ENCODE measurements at regions of chr2 and their contacts with region 1.

Region 1: DNA sequence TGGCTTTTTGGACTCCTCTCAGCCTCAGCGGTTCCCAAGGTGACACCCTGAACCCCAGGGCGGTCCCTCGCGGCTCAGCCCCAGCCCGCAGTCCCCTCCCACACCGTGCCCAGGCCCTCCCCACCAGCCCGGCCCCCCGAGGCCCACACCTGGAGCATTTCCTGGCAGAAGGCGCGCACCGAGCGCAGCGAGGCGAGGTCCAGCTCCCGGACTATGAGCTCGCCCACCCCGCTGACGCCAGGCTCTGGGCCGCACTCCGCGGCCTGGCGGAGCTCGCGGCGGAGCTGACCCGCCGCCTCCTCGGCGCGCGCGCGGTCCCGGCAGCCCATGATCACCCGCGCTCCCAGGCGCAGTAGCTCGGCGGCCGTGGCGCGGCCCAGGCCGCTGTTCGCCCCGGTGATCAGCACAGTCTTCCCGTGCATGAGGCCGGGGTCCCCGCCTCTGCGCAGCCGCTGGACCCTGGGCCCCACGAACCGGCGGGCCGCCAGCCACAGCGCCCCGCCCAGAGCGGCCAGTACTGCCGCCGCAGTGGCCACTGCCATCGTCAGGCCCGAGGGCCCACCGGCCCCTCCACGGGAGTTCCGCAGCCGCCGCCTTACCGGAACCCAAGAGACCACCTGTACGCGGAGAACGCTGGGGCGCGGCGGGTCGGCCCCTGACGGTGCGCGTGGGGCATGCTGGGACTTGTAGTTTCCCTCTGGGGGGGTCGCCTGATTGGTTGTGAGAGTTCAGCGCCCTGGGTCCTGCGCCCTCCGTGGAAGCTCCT is at the start of gene RDH14:
- DNase-seq: peak; percentile 94
- ATAC-seq: peak; percentile 94
- H3K4me3 Mint-ChIP-seq: peak within 1 kb of the TSS; percentile 84
- H3K27ac Mint-ChIP-seq: peak within 1 kb of the TSS; percentile 90
- H3K4me1 Mint-ChIP-seq: peaks cover 32% of the 10 kb centered on the region
- H3K27me3 Mint-ChIP-seq: no peaks in the 10 kb centered on the region
- total RNA-seq, gene RDH14: 16.1 to 18.3 TPM

Region 2: DNA sequence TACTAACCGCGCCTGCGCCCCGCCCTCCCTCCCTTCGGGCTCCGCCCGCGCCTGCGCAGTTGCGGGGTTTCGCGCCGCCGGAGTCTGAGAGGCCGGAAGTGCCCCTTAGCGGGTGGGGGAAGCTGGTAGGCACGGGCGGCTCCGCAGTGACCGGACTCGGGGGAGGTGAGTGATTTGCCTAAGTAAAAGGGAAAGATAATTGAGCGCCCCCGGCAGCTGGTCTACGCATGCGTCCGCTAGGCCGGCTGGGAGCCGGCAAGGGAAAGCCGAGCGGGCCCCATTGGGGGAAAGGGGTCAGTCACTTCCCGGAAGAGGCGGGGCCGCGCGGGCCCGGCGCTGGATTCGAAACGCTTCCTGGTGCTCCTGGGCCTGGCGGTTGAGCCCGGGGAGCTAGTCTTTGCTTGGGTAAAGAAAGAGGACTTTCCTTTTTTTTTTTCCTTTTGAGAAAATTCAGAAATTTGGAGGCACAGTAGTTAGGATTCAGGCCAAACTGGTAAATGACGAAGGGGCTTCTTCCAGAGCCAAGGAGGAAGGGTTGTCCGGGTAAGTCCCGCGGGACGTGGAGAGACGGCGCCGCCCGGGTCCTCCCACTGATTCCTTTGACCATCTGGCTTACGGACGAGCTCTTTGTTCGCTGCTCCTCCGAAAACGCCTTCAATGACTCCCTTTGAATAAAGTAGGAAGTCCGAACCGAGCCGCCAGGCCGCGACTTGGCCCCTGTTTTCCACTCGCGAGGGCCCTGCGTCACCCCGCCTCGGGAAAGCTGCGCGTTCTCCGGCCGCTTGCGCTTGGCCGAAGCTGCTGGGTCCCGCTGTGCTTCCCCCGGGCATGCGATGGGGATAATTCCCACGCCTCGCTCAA is 806.2 kb before region 1 on chr2 and contains the starts of genes GEN1 and SMC6:
- CTCF ChIA-PET with region 1: no interaction called
- POLR2A ChIA-PET with region 1: no interaction called
- intact Hi-C with region 1: loop called in 1 of 2 experiments (anchors 5 kb)
- DNase-seq: peak; percentile 95
- ATAC-seq: peak; percentile 90
- H3K4me3 Mint-ChIP-seq: peak within 1 kb of the TSS; percentile 91
- H3K27ac Mint-ChIP-seq: peak within 1 kb of the TSS; percentile 93
- H3K4me1 Mint-ChIP-seq: peaks cover 20% of the 10 kb centered on the region
- H3K27me3 Mint-ChIP-seq: no peaks in the 10 kb centered on the region
- total RNA-seq, gene GEN1: 21.9 to 25.4 TPM
- total RNA-seq, gene SMC6: 25.4 to 26.3 TPM

Region 3: DNA sequence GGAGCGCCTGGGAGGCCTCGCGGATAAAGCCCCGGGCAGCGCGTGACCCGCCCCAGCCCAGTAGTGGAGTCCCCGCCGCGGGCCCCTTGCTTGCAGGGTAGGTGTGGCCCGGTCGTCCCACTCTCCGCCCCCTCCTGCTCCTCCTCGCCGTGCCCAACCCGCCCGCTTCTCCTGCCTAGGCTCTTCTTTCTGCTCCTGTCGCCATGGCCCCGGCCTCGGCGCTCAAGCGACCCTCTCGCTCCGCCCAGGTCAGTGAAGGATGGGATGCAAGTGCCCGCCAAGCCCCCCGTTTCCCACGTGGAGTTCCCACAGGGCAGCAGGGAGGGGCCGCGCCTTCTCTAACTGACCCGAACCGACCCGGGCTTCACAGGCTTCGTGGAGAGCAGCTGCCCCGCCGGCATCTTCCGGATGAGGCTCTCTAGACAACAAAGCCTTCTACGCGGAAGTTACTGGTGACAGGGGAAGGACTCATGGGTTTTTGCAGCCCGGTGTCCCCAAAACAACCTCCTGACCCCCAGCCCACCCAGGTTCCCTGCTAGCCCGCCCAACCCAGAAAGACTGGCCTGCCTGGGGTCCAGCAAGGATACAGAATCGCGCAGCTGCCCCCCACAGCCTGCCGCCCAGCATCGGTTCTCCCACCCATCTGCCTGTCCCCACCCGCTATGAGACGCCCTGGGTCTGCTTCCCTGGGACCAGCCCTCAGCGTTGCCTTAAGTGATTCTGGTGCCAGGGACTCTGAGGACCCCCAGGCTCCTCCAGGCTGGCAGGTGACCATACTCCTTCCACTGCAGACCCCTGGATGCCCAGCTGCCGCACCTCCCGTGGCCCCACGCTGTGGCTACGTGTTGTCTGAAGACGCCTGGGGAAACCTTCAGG is 1308.7 kb after region 1 on chr2:
- CTCF ChIA-PET with region 1: no interaction called
- POLR2A ChIA-PET with region 1: no interaction called
- intact Hi-C with region 1: loop called in 1 of 2 experiments (anchors 5 kb)
- DNase-seq: peak; percentile 73
- ATAC-seq: peak; percentile 88
- H3K4me3 Mint-ChIP-seq: peak overlapping the region; percentile 76
- H3K27ac Mint-ChIP-seq: peak overlapping the region; percentile 87
- H3K4me1 Mint-ChIP-seq: peaks cover 20% of the 10 kb centered on the region
- H3K27me3 Mint-ChIP-seq: no peaks in the 10 kb centered on the region

Region 4: DNA sequence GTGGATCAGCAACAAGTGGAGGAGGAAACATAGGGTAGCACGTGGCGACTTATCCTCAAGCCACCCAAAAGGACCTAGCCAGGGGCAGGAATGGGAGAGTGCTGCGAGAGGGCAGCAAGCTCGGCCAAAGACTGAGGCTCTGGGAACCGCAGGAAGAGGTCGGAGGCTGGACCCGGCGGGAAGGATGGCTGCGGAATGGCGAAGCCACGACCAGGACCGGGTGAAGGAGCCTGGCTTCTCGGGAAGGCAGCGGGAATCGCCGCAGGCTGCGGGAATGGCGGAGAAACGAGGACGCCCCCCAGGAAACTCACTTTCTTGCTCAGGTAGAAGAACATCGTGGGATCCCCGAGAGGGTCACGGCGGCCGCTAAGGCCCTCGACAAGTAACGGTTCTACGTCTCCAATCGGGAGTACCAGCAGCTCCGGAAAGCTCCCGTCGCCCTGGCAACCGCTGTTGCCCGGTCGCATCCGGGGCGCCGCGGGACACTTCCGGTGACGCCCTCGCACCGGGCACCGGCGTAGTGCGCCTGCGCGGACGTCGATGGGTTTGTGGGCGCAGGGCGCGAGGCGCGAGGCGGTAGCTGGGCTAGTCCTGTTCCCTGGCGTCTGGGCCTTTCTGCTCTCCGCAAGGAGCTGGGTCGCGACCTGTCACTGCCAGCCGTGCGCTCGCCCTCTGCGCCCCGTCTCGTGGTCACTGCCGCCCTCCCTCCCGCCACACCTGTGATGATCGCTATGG is 1429.6 kb after region 1 on chr2 and contains the start of gene WDR35:
- CTCF ChIA-PET with region 1: no interaction called
- POLR2A ChIA-PET with region 1: no interaction called
- intact Hi-C with region 1: loop called in 1 of 2 experiments (anchors 10 kb)
- DNase-seq: peak; percentile 95
- ATAC-seq: peak; percentile 97
- H3K4me3 Mint-ChIP-seq: peak within 1 kb of the TSS; percentile 90
- H3K27ac Mint-ChIP-seq: peak within 1 kb of the TSS; percentile 75
- H3K4me1 Mint-ChIP-seq: peaks cover 28% of the 10 kb centered on the region
- H3K27me3 Mint-ChIP-seq: peaks cover 12% of the 10 kb centered on the region
- total RNA-seq, gene WDR35: 6.2 to 7.4 TPM